HEK293 (cell line): ENCODE measurements at regions of chr19 and their contacts with region 1.

Region 1: DNA sequence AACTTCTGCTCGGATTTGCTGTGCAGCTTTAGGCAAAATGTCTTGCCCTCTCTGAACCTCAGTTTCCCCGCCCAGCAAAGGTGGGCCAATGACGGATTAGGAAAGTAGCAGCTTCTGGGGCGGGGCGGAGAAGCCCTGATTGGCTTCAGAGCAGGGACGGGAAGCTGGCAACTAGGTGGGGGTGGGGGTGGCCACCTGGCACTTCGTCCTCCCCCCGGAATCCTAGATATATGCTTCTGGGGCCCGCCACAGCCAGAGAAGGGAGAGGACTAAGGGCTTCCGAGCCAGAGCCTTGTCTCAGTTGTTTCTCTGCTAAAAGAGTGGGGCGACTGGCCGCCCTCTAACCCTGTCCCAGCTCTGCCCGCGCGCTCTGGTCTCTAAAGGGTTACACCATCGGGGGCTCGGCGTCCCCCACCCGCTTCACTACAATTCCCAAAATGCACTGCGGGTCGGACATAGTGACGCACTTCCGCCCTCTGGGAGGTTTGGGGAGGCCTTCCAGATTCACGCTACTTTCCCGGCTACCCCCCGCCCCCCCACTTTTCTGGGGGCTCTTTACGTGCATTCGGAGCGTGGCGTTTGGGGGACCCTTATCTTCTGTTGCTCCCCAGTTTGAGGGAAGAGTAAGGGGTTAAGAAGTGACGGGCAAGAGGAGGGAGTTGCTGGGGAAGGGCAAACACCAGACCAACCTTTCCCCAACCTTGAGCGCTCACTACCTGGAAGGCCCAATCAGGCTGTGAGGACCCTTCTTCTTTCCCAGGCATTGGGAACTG is 672 bp upstream of the IRF2BP1 start:
- H3K4me3 ChIP-seq: peak overlapping the region; percentile 65
- H3K27ac ChIP-seq: peak overlapping the region; percentile 93
- H3K4me1 ChIP-seq: peaks cover 13% of the 10 kb centered on the region
- CTCF ChIP-seq: no peak

Region 2: GRCh38 chr19:45824531-45825262 is 61.9 kb before region 1 on chr19:
- CTCF ChIA-PET with region 1: interaction called, 12 read pairs
- POLR2A ChIA-PET with region 1: no interaction called
- H3K4me3 ChIP-seq: no peak overlapping the region
- H3K27ac ChIP-seq: 0 out of 2 replicates have a peak overlapping the region, but pooled peaks have one; percentile 9
- H3K4me1 ChIP-seq: no peaks in the 10 kb centered on the region
- CTCF ChIP-seq: no peak

Region 3: GRCh38 chr19:45862564-45863334 is 23.9 kb before region 1 on chr19 and contains the start of gene SYMPK:
- CTCF ChIA-PET with region 1: interaction called, 91 read pairs
- POLR2A ChIA-PET with region 1: interaction called, 39 read pairs
- H3K4me3 ChIP-seq: peak within 1 kb of the TSS; percentile 71
- H3K27ac ChIP-seq: peak within 1 kb of the TSS; percentile 83
- H3K4me1 ChIP-seq: peaks cover 10% of the 10 kb centered on the region
- CTCF ChIP-seq: no peak; the same call in 1 of the 2 replicates

Region 4: GRCh38 chr19:45872095-45872919 is 14.3 kb before region 1 on chr19:
- CTCF ChIA-PET with region 1: interaction called, 91 read pairs
- POLR2A ChIA-PET with region 1: interaction called, 4 read pairs
- H3K4me3 ChIP-seq: no peak overlapping the region
- H3K27ac ChIP-seq: no peak overlapping the region
- H3K4me1 ChIP-seq: no peaks in the 10 kb centered on the region
- CTCF ChIP-seq: no peak

Region 5: GRCh38 chr19:45902651-45903625 is 16.3 kb after region 1 on chr19:
- CTCF ChIA-PET with region 1: interaction called, 25 read pairs
- POLR2A ChIA-PET with region 1: interaction called, 46 read pairs
- H3K4me3 ChIP-seq: peak overlapping the region; percentile 75
- H3K27ac ChIP-seq: peak overlapping the region; percentile 63
- H3K4me1 ChIP-seq: peaks cover 9% of the 10 kb centered on the region; the same call in 1 of the 2 replicates
- CTCF ChIP-seq: peak; percentile 52

Region 6: GRCh38 chr19:45913874-45914830 is 27.5 kb after region 1 on chr19 and contains the start of gene NANOS2:
- CTCF ChIA-PET with region 1: interaction called, 3 read pairs
- POLR2A ChIA-PET with region 1: interaction called, 10 read pairs
- H3K4me3 ChIP-seq: no peak within 1 kb of the TSS
- H3K27ac ChIP-seq: no peak within 1 kb of the TSS
- H3K4me1 ChIP-seq: no peaks in the 10 kb centered on the region
- CTCF ChIP-seq: no peak

Region 7: GRCh38 chr19:45994989-45995714 is 108.5 kb after region 1 on chr19 and contains the start of gene CCDC61:
- CTCF ChIA-PET with region 1: no interaction called
- POLR2A ChIA-PET with region 1: interaction called, 30 read pairs
- H3K4me3 ChIP-seq: peak within 1 kb of the TSS; percentile 62
- H3K27ac ChIP-seq: no peak within 1 kb of the TSS; the same call in 1 of the 2 replicates
- H3K4me1 ChIP-seq: peaks cover 12% of the 10 kb centered on the region
- CTCF ChIP-seq: no peak